ENCODE measurements at regions of chr5 and their contacts with region 1.

Region 1: GRCh38 chr5:43191740-43192557 is at the start of gene NIM1K:
- DNase-seq: peak; percentile 53
- ATAC-seq: peak; percentile 61
- H3K4me3 Mint-ChIP-seq: peak within 1 kb of the TSS; percentile 82
- H3K27ac Mint-ChIP-seq: peak within 1 kb of the TSS; percentile 75
- H3K4me1 Mint-ChIP-seq: peaks cover 29% of the 10 kb centered on the region
- H3K27me3 Mint-ChIP-seq: peaks cover 21% of the 10 kb centered on the region
- CTCF ChIP-seq: no peak
- total RNA-seq, gene NIM1K: 2.1 to 3.2 TPM

Region 2: GRCh38 chr5:43305948-43306565 is 114.1 kb after region 1 on chr5:
- CTCF ChIA-PET with region 1: no interaction called
- POLR2A ChIA-PET with region 1: no interaction called
- intact Hi-C with region 1: loop called (anchors 10 kb)
- DNase-seq: no peak
- ATAC-seq: peak; percentile 61
- H3K4me3 Mint-ChIP-seq: no peak overlapping the region
- H3K27ac Mint-ChIP-seq: peak overlapping the region; percentile 81
- H3K4me1 Mint-ChIP-seq: peaks cover 79% of the 10 kb centered on the region
- H3K27me3 Mint-ChIP-seq: no peaks in the 10 kb centered on the region
- CTCF ChIP-seq: peak; percentile 63